PC-9 (cell line): ENCODE measurements at regions of chr3 and their contacts with region 1.

Region 1: GRCh38 chr3:128170805-128171516 is 17.7 kb downstream of the EEFSEC start:
- DNase-seq: peak; percentile 69 to 71
- H3K4me3 ChIP-seq: no peak overlapping the region
- H3K27ac ChIP-seq: no peak overlapping the region
- H3K4me1 ChIP-seq: peaks cover 21% of the 10 kb centered on the region
- H3K27me3 ChIP-seq: no peaks in the 10 kb centered on the region
- CTCF ChIP-seq: peak; percentile 78

Region 2: GRCh38 chr3:127822698-127823425 is 348.1 kb before region 1 on chr3:
- CTCF ChIA-PET with region 1: interaction called, 10 read pairs
- POLR2A ChIA-PET with region 1: no interaction called
- intact Hi-C with region 1: no loop called
- DNase-seq: peak in 1 of 2 experiments; percentile 49
- H3K4me3 ChIP-seq: peak overlapping the region; percentile 76
- H3K27ac ChIP-seq: peak overlapping the region; percentile 93
- H3K4me1 ChIP-seq: peaks cover 44% of the 10 kb centered on the region
- H3K27me3 ChIP-seq: no peaks in the 10 kb centered on the region
- CTCF ChIP-seq: no peak

Region 3: DNA sequence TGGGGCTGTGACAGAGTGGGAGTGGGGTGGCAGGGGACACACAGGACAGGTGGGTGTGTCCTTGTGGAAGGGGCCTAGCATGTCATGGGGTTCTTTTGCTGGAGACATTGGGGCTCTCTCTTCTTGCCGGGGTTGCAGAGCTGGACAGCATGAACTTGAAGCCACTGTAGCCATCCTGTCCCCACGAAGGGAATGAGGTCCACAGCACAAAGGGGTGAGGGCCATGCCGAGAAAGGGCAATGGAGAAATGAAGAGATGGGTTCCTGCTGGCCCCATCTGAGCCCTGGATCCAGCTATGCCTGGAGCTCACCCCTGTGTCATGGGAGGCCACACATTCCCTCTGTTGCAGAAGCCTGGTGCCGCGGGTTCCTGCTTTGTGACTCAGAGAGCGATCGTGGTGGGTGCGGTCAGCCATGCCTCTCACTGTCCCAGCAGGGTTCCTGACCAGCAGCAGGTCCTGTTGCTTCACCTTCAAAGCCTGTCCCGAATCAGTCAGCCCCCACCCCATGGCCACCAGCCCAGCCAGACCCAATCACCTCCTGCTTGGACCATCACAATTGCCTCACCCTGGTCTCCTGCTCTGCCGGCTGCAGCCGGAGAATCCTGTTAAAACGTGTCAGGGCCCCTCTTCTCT is 245.7 kb after region 1 on chr3:
- CTCF ChIA-PET with region 1: no interaction called
- POLR2A ChIA-PET with region 1: no interaction called
- intact Hi-C with region 1: loop called (anchors 2 kb)
- DNase-seq: peak; percentile 96 to 98
- H3K4me3 ChIP-seq: no peak overlapping the region
- H3K27ac ChIP-seq: no peak overlapping the region
- H3K4me1 ChIP-seq: peaks cover 30% of the 10 kb centered on the region
- H3K27me3 ChIP-seq: no peaks in the 10 kb centered on the region
- CTCF ChIP-seq: no peak

Region 4: DNA sequence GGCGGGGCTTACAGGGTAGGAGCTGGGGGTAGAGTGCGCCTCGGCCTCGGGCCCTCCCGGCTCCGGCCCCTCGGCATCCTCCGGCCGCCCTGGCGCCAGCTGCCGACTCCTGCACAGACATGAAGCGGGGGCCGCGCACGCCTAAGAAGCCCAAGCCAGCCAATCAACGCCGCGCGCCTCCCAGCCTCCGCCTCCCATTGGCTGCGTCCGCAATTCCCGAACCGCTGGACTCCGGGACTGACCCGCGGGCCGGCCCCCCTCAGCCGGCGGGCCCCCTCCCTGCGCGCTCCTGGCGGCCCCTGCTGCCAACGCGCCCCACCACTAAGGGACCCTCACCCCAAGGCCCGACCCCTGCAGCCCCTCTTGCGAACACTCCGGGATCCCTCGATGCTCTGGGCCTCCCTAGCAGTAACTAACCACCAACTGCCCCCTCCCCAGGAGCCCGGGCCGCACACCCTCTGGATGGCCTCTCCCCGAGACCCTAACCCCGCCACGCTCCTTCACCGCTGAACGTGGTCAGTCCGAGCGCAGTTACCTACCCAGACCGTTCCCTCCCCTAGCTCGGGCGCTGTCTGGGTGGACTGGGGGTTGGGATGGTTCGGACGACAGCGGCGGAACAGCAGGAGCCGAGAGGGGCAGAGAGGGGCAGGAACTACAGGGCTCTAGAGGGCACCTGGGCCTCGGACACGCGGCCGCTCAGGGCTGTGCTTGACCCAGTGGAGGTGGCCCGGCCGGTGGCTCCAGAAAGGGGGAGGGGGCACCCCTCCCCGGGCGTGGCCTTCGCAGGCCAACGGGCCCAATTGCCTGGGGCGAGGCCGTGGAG is 317.1 kb after region 1 on chr3:
- CTCF ChIA-PET with region 1: no interaction called
- POLR2A ChIA-PET with region 1: no interaction called
- intact Hi-C with region 1: loop called (anchors 5 kb)
- DNase-seq: peak; percentile 81 to 94
- H3K4me3 ChIP-seq: peak overlapping the region; percentile 93
- H3K27ac ChIP-seq: peak overlapping the region; percentile 7; the same call in 1 of the 2 replicates
- H3K4me1 ChIP-seq: peaks cover 44% of the 10 kb centered on the region
- H3K27me3 ChIP-seq: no peaks in the 10 kb centered on the region
- CTCF ChIP-seq: no peak

Region 5: DNA sequence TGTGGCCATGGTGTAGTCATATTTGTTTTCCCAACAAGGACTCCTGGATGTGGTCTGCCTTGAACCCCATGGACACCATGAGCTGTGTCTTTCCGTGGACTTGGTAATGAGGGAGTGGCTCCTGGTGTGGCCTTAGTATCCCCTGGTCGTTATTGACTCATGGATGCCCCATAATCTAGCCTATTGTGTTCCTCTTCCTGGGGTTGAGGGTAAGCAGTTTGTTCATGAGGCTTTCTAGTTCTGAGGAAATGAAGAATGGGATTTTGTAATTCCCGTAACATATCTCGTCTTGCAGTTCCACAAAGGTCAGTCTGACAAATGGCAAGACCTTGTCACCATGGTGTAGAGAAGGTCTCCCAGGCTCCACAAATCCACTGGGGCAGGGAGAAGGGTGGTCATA is 577.6 kb after region 1 on chr3:
- CTCF ChIA-PET with region 1: no interaction called
- POLR2A ChIA-PET with region 1: interaction called, 47 read pairs
- intact Hi-C with region 1: no loop called
- DNase-seq: no peak
- H3K4me3 ChIP-seq: no peak overlapping the region
- H3K27ac ChIP-seq: no peak overlapping the region
- H3K4me1 ChIP-seq: no peaks in the 10 kb centered on the region
- H3K27me3 ChIP-seq: no peaks in the 10 kb centered on the region
- CTCF ChIP-seq: no peak